Gastrocnemius medialis (tissue), 4 donors: ENCODE measurements at regions of chr3 and their contacts with region 1.

Region 1: GRCh38 chr3:17140670-17141505 is 256.1 kb downstream of the PLCL2 start:
- DNase-seq: peak; percentile 73 to 90
- ATAC-seq: peak; percentile 86 to 87
- H3K4me3 ChIP-seq: peak overlapping the region; percentile 27 to 54 (median 38)
- H3K27ac ChIP-seq: peak overlapping the region; percentile 82 to 87 (median 85)
- H3K4me1 ChIP-seq: peaks cover 11 to 25% of the 10 kb centered on the region in 2 donors
- H3K27me3 ChIP-seq: no peaks in the 10 kb centered on the region
- CTCF ChIP-seq: peak in 4 of 5 experiments; percentile 37 to 62 (median 41)
- POLR2A ChIP-seq: no peak

Region 2: GRCh38 chr3:16842272-16843270 is 298.3 kb before region 1 on chr3:
- in situ Hi-C with region 1: no loop called
- intact Hi-C with region 1: loop called (anchors 5 kb)
- DNase-seq: peak; percentile 22 to 52
- ATAC-seq: peak in 1 of 2 donors; percentile 8
- H3K4me3 ChIP-seq: peak overlapping the region; percentile 43 to 51 (median 50)
- H3K27ac ChIP-seq: peak overlapping the region; percentile 73 to 90 (median 79)
- H3K4me1 ChIP-seq: peaks cover 71% of the 10 kb centered on the region in 2 donors
- H3K27me3 ChIP-seq: no peaks in the 10 kb centered on the region
- CTCF ChIP-seq: no peak
- POLR2A ChIP-seq: no peak

Region 3: DNA sequence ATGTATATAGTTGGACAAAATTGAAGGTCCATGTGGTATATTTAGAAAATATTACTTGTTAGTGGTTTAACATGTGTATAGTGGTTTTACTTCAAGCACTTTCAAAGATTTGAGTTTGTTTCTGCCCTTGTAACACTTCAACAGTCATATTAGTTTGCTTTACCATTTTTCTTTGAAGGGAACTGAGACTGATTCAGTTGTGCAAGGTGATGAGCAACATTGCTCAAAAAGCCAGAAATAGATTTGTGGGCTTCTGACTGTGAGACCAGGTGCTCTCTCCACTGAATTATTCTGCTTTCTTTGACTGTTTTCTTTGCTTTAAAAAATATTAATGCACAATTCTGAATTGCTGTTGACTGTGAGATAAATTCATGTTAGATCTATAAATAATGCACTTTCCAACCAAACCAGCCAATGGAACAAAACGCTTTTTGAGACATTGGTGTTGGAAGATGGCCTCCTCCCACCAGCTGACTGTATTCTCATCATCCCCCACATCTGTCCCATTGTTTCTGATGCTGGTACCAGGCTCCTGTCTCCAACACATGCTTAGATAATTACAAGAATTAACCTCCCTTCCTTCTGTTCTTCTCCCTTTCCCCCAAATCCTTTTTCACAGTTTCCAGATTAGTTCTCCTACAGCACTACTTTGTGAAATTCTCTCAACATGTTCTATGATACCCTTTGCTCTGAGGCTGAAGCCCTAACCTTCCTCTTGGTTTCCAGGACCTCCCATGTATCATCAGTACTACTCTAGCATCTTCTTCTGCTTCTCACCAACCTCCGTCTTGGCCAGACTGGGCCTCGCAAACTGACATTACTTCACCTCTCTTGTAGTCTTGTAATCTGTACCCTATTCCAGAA is 228.3 kb before region 1 on chr3:
- in situ Hi-C with region 1: no loop called
- intact Hi-C with region 1: loop called (anchors 10 kb)
- DNase-seq: no peak
- ATAC-seq: peak; percentile 78 to 85
- H3K4me3 ChIP-seq: no peak overlapping the region
- H3K27ac ChIP-seq: peak overlapping the region; percentile 44 to 86 (median 59)
- H3K4me1 ChIP-seq: peaks cover 82 to 85% of the 10 kb centered on the region in 2 donors
- H3K27me3 ChIP-seq: no peaks in the 10 kb centered on the region
- CTCF ChIP-seq: no peak
- POLR2A ChIP-seq: no peak

Region 4: GRCh38 chr3:17088602-17089313 is 52.1 kb before region 1 on chr3:
- in situ Hi-C with region 1: no loop called
- intact Hi-C with region 1: loop called (anchors 1 kb)
- DNase-seq: peak; percentile 66 to 78
- ATAC-seq: peak; percentile 43 to 64
- H3K4me3 ChIP-seq: peak overlapping the region in 2 of 4 donors; percentile 19 to 29
- H3K27ac ChIP-seq: peak overlapping the region; percentile 91 to 94 (median 93)
- H3K4me1 ChIP-seq: peaks cover 52 to 59% of the 10 kb centered on the region in 2 donors
- H3K27me3 ChIP-seq: no peaks in the 10 kb centered on the region
- CTCF ChIP-seq: no peak
- POLR2A ChIP-seq: peak in 1 of 2 donors; percentile 25

Region 5: GRCh38 chr3:17103579-17103978 is 37.3 kb before region 1 on chr3:
- in situ Hi-C with region 1: no loop called
- intact Hi-C with region 1: no loop called
- DNase-seq: no peak
- ATAC-seq: no peak
- H3K4me3 ChIP-seq: no peak overlapping the region
- H3K27ac ChIP-seq: no peak overlapping the region
- H3K4me1 ChIP-seq: no peaks in the 10 kb centered on the region
- H3K27me3 ChIP-seq: no peaks in the 10 kb centered on the region
- CTCF ChIP-seq: no peak
- POLR2A ChIP-seq: no peak

Region 6: DNA sequence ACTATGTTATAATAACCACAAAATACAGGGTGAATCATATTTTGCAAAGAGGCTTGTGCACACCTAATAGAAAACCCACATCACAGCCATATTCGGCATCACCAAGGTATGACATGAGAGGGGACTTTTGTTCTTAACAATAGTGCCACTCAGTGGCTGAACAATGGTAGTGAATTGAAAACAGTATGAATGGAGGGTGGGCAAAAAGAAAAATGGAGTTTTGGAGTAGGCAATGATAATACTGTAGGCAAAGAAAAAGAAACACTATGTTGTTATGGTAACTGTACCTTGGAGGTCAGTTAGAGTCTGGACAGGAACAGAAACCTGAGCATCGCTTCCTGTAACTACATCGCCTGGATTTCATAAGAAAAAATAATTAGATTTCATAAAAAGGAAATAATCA is 92.5 kb after region 1 on chr3:
- in situ Hi-C with region 1: no loop called
- intact Hi-C with region 1: loop called (anchors 1 kb)
- DNase-seq: no peak
- ATAC-seq: peak; percentile 91 to 95
- H3K4me3 ChIP-seq: no peak overlapping the region
- H3K27ac ChIP-seq: peak overlapping the region in 2 of 4 donors; percentile 48 to 61
- H3K4me1 ChIP-seq: peaks cover 35 to 38% of the 10 kb centered on the region in 2 donors
- H3K27me3 ChIP-seq: no peaks in the 10 kb centered on the region
- CTCF ChIP-seq: peak; percentile 63 to 80 (median 76)
- POLR2A ChIP-seq: no peak

Region 7: GRCh38 chr3:17301271-17301670 is 160.4 kb after region 1 on chr3:
- in situ Hi-C with region 1: no loop called
- intact Hi-C with region 1: no loop called
- DNase-seq: no peak
- ATAC-seq: peak in 1 of 2 donors; percentile 45
- H3K4me3 ChIP-seq: no peak overlapping the region
- H3K27ac ChIP-seq: no peak overlapping the region
- H3K4me1 ChIP-seq: peaks cover 6 to 24% of the 10 kb centered on the region in 2 donors
- H3K27me3 ChIP-seq: no peaks in the 10 kb centered on the region
- CTCF ChIP-seq: no peak
- POLR2A ChIP-seq: no peak